ENCODE measurements at regions of chr5 and their contacts with region 1.

Region 1: DNA sequence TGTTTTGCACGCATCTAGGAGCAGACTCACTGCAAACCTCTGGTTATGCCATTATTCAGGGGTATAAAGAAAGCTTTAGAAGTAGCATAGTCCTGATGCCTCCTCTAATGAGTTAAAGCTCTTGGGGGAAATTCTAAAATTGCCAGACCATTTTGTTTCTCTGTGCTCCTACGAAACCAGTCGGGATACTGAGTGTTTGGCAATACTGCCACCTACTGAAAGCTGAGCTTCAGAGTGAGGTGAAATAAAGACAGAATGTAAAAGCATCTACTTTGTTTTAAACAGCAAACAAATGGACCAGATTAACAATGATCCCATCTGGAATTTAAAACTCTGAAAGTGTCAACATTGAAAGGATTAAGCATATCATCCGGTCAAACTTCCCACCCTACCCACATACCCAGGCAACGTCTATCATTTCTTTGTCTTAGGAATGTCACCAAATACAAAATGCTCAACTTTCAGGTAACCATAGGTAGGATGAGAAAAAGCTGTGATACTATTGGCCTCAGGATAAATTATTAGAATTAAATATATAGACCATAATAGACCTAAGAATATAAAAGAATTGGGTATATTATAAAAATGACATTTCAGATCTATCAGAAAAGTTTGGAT is 77.8 kb upstream of the SHISAL2B start:
- DNase-seq: peak; percentile 54

Region 2: DNA sequence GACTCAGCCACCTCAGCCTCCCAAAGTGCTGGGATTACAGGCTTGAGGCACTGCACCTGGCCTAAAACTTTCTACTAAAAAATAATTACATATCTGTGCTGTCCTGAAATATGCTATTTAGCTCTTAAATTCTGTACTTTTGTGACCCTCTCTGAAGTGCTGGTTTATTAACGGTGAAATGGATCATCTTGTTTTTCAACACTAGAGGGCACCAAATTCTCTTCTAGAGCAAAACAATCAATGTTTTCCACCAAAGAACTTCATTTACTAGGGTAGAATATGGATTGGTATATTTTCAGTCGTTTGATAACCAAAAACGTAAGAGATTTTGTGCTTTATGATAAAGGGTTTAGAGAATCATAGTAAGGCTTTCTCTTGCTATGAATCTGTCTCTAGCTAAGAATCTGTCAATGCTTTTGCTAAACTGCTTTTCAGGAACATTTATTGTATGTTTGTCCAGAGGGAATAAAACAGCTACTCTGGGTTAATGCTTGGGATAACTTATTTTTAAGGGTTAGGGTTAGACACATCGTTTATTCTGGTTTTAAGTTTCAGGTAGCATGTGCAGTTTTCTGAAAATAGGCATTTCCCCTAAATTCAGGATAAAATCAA is 383.2 kb before region 1 on chr5:
- CTCF ChIA-PET with region 1: interaction called, 35 read pairs
- POLR2A ChIA-PET with region 1: no interaction called
- DNase-seq: peak; percentile 32